Dendritic cell treated with granulocyte-macrophage colony-stimulating factor and Interleukin-4, amounts not matched to agents 40 ng/mL and 50 ng/mL, for 4 days (primary cell): ENCODE measurements at regions of chr1 and their contacts with region 1.

Region 1: DNA sequence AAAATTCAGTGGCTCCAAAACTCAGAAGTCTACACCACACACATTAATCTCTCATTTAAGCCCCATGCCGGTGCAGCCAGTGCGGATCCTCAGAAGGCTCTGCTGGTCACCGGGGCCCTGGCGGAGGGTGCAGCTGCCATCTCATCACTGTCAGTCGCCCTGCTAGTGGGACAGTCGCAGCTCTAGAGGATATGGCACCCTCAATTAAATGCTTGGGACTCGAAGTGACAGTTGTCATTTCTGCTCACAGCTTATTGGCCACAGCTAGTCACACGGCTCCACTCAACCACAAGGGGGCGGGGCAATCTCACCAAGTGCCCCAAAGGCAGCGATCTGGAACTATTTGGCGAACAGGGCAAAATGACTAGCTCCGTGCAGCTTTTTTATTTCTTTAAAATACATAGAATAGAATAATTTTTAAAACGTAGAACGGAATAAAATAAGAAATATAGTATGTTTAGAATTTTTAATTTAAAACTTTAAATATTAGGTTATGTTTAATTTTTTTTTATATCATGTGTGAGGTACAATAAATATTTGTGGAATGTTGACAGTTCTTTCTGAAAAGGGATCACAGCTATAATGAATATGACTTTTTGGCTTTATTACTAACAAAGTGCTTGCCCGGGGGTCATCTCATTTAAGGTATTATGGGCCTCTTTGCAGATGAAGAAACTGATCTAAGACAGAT is 8.0 kb upstream of the MAN1C1 start:
- H3K4me3 Mint-ChIP-seq: peak overlapping the region; percentile 9
- H3K27ac Mint-ChIP-seq: no peak overlapping the region
- H3K4me1 Mint-ChIP-seq: no peaks in the 10 kb centered on the region
- H3K27me3 Mint-ChIP-seq: peaks cover 42% of the 10 kb centered on the region

Region 2: DNA sequence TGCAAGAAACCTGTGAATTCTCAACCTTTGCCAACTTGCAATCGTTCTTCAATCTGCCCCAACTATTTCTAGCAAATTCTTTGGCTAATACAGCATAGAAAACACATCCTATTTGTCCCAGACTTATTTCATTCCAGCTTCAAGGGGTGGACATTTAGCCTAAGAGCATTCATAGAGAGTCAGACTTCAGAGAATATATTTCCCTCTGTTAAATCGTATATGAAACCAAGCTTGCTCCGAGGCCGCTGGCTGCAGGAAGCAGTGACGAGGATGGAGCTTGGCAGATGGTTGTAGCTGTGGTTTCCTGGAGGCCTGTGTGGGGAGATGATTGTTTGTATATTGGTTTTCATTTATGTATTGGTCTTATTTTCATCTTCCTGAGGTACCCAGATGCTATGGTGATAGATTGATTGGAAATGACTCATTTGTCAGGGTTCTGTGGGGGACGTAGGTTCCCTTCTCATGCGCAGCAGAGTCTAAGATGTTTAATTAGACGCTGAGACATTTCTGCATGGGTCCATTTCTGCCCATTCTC is 34.0 kb after region 1 on chr1:
- intact Hi-C with region 1: no loop called
- H3K4me3 Mint-ChIP-seq: no peak overlapping the region
- H3K27ac Mint-ChIP-seq: no peak overlapping the region
- H3K4me1 Mint-ChIP-seq: peaks cover 17% of the 10 kb centered on the region
- H3K27me3 Mint-ChIP-seq: peaks cover 5% of the 10 kb centered on the region

Region 3: GRCh38 chr1:25796811-25797458 is 188.3 kb after region 1 on chr1:
- intact Hi-C with region 1: loop called (anchors 2 kb)
- H3K4me3 Mint-ChIP-seq: no peak overlapping the region
- H3K27ac Mint-ChIP-seq: peak overlapping the region; percentile 1
- H3K4me1 Mint-ChIP-seq: peaks cover 25% of the 10 kb centered on the region
- H3K27me3 Mint-ChIP-seq: peaks cover 8% of the 10 kb centered on the region